Posterior vena cava (tissue), 2 donors: ENCODE measurements at regions of chr1 and their contacts with region 1.

Region 1: GRCh38 chr1:36285448-36286101 is 20.6 kb upstream of the SH3D21 start:
- DNase-seq: no peak

Region 2: DNA sequence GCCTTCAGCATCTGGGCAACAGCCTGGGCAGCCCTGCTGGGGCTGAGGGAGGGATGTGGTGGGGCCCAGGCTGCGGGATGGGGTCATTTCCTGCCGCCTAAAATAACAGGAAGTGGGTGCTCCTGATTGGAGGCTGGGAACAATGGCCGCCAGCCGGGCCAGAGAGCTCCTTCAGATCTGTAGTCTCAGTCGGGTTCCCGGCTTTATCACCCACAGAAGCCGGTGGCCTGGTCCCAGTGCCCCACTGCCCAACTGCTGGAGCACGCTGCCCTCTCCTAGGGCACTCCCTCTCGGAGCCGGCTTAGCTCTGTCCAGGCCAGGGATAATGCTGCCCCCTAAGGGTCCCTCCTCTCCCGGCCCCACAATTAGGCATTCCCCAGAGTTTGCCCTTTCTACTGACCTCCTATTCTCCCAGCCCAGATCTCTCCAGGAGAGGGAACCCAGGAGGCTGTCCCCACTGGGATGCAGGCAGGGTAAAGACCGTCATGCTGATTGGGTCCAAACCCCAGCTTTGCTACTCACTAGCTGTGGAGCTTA is 124.6 kb before region 1 on chr1:
- intact Hi-C with region 1: loop called (anchors 1 to 5 kb)
- DNase-seq: peak; percentile 91

Region 3: GRCh38 chr1:36231191-36231590 is 54.4 kb before region 1 on chr1:
- intact Hi-C with region 1: loop called in 1 of 2 experiments (anchors 5 kb)
- DNase-seq: no peak